ENCODE measurements at regions of chr5 and their contacts with region 1.

Region 1: GRCh38 chr5:139137702-139138101 is 60.5 kb downstream of the SIL1 start:
- DNase-seq: peak in 1 of 2 experiments; percentile 33
- H3K4me3 ChIP-seq: no peak overlapping the region
- H3K4me3 Mint-ChIP-seq: no peak overlapping the region
- H3K27ac Mint-ChIP-seq: no peak overlapping the region
- H3K4me1 ChIP-seq: no peaks in the 10 kb centered on the region
- H3K4me1 Mint-ChIP-seq: no peaks in the 10 kb centered on the region
- H3K27me3 ChIP-seq: no peaks in the 10 kb centered on the region
- H3K27me3 Mint-ChIP-seq: no peaks in the 10 kb centered on the region
- CTCF ChIP-seq: peak; percentile 14 to 38

Region 2: DNA sequence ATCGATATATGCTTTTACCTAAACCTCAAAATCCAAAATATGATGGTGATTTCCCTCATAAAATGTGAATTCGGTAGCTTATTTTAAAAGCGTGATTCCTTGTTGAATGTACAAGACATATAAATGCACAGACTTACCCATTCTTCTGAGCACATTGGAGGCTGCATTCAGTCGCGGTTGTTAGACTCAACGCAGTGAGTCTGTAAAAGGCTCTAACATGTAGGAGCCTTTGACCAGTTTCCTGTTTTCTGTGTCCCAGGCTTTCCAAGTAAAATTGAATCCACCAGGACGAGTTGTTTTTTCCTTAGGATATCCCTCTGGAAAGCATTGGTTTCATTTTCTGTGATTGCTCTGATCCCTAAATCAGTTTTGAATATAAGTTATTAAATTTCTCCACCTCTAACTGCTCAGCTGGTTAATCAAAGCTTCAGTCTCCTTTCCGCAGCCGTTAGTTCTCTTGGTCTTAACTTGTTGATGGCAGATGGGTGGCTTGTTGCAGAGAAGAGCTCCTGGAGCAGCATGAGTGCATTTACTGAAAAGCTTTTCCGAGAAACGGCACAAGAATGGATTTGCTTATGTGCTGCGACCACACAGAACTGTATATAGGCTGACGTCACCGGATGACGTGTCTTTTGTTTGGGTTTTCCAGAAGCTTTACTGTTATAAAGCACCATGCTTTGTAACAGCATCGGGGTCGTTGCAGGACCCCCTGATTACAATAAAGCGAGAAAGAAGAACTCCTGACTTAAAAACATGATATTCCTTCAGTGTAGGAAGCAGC is 262.7 kb before region 1 on chr5 and contains the start of gene LRRTM2:
- CTCF ChIA-PET with region 1: no interaction called
- POLR2A ChIA-PET with region 1: no interaction called
- intact Hi-C with region 1: loop called (anchors 10 kb)
- DNase-seq: no peak
- H3K4me3 ChIP-seq: no peak within 1 kb of the TSS
- H3K4me3 Mint-ChIP-seq: no peak within 1 kb of the TSS
- H3K27ac Mint-ChIP-seq: no peak within 1 kb of the TSS
- H3K4me1 ChIP-seq: peaks cover 22% of the 10 kb centered on the region
- H3K4me1 Mint-ChIP-seq: peaks cover 20% of the 10 kb centered on the region
- H3K27me3 ChIP-seq: no peaks in the 10 kb centered on the region
- H3K27me3 Mint-ChIP-seq: no peaks in the 10 kb centered on the region
- CTCF ChIP-seq: no peak
- total RNA-seq, gene LRRTM2: not detected in 2 replicates

Region 3: DNA sequence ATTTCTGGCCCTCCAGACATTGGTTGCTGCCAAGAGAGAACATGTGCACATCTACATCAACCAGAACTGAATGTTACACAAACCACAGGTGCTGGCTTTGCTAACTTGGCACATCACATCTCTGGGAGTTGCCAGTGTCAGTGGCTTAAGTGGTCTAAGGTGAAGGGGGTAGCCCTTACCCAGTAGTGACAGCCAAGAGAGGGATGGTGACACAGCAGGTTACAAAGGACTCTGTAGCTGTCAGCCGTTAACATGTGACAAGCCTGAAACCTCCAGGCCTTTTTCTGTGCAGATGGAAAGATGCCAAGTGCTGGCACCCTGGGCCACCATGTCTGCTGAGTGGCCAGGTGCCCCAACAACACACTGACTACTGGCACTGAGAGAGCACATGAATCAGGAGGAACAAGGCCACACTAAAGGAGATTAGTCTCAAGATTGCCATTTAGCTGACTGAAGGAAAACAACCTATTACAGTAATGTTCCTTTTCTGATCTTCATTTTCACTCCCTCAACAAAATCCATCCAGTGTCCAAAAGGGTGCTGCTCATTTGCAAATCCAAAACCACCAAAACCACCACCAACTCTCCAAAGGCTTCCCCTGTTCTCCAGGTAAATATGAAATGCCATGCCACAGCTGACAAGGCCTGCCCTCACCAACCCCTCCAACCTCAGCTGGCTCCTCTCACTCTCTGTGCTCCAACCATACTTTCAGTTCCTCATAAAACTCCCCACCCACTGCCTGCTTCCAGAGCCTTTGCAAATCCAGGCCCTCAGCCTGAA is 40.3 kb after region 1 on chr5:
- CTCF ChIA-PET with region 1: no interaction called
- POLR2A ChIA-PET with region 1: interaction called, 15 read pairs
- intact Hi-C with region 1: no loop called
- DNase-seq: no peak
- H3K4me3 ChIP-seq: no peak overlapping the region
- H3K4me3 Mint-ChIP-seq: no peak overlapping the region
- H3K27ac Mint-ChIP-seq: no peak overlapping the region
- H3K4me1 ChIP-seq: no peaks in the 10 kb centered on the region
- H3K4me1 Mint-ChIP-seq: peaks cover 10% of the 10 kb centered on the region
- H3K27me3 ChIP-seq: no peaks in the 10 kb centered on the region
- H3K27me3 Mint-ChIP-seq: no peaks in the 10 kb centered on the region
- CTCF ChIP-seq: no peak

Measured in Caco-2 (cell line).